ENCODE measurements at regions of chr11 and their contacts with region 1.

Region 1: GRCh38 chr11:8099291-8099899 is 18.4 kb downstream of the TUB start:
- ATAC-seq: peak; percentile 36 to 87 (median 55)
- H3K4me3 ChIP-seq: no peak overlapping the region
- H3K27ac ChIP-seq: no peak overlapping the region
- H3K4me1 ChIP-seq: no peaks in the 10 kb centered on the region

Region 2: GRCh38 chr11:7892840-7893254 is 206.5 kb before region 1 on chr11:
- in situ Hi-C with region 1: loop called in 1 of 9 experiments (anchors 25 kb)
- ATAC-seq: peak in 4 of 8 experiments; percentile 11 to 84 (median 43)
- H3K4me3 ChIP-seq: no peak overlapping the region
- H3K27ac ChIP-seq: no peak overlapping the region
- H3K4me1 ChIP-seq: no peaks in the 10 kb centered on the region

Region 3: GRCh38 chr11:8006349-8006977 is 92.9 kb before region 1 on chr11:
- in situ Hi-C with region 1: loop called in 4 of 9 experiments (anchors 10 to 25 kb)
- ATAC-seq: peak; percentile 91 to 99 (median 96)
- H3K4me3 ChIP-seq: no peak overlapping the region
- H3K27ac ChIP-seq: no peak overlapping the region
- H3K4me1 ChIP-seq: no peaks in the 10 kb centered on the region

Region 4: DNA sequence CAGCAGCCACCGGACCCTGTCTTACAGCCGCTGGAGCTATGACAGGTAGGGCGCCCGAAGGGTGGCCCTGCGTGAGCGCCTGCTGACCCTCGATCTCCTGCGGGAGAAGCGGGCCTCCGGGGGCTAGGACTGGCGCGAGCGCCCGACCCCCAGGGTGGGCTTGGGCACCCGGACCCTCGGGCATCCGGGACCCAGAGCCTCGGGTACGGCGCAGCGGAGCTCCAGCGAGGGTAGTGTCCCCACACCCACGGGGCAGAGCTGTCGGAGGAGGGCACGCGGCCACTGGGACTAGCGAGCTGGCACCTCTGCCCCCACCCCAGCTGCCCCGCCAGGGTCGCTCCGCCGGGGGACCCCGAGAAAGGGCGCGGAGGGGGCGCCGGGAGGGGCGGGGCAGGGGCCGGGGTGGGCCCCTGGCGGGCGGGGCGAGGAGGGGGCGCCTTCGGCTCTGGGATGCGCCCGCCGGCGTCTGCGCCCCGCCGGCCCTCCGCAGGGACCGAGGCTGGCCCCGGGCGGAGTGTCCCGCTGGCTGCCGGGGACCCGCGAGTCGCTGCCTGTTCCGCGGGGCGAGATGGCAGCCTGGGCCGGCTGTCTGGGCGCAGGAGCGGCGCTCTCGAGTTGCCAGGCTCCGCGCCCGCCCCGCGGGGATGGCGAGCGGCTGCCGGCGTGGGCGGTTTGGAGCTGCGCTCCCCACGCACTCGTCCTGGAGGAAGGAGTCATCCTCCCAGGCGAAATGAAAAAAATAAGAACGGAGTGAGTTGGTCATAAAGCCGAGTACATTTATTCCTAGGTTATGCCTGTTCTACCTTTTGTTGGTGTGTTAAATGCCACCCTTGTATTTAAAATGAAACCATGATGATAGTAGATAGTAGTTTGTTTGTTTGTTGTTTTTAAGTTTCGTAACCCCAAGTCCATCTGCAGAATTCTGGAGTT is 79.8 kb before region 1 on chr11:
- in situ Hi-C with region 1: loop called in 2 of 9 experiments (anchors 10 to 25 kb)
- ATAC-seq: peak; percentile 17 to 67 (median 60)
- H3K4me3 ChIP-seq: peak overlapping the region; percentile 45 to 72 (median 66)
- H3K27ac ChIP-seq: peak overlapping the region; percentile 49 to 67
- H3K4me1 ChIP-seq: peaks cover 22 to 23% of the 10 kb centered on the region in 2 donors

Region 5: DNA sequence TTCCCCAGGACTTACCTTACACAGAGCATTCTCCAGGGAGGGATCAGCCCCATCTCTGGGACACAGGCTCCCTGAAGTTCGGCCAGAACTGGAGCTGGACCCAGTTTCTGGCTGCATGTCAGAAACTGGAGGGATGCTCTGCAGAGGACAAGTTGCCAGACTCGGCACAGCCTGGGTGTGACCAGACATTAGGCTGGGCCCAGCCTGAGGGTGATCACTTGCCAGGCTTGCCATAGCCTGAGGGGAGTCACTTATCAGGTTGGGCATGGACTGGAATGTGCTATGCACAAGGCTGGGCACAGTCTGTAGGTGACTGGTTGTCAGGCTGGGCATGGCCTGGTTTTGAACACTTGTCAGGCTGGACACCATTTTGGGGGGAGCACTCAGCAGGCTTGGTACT is 525.3 kb after region 1 on chr11:
- in situ Hi-C with region 1: no loop called
- ATAC-seq: no peak
- H3K4me3 ChIP-seq: no peak overlapping the region
- H3K27ac ChIP-seq: no peak overlapping the region
- H3K4me1 ChIP-seq: no peaks in the 10 kb centered on the region

Region 6: GRCh38 chr11:9103208-9103898 is 1004.0 kb after region 1 on chr11:
- in situ Hi-C with region 1: no loop called
- ATAC-seq: peak in 1 of 8 experiments; percentile 96
- H3K4me3 ChIP-seq: no peak overlapping the region
- H3K27ac ChIP-seq: no peak overlapping the region
- H3K4me1 ChIP-seq: no peaks in the 10 kb centered on the region